ENCODE measurements at regions of chr5 and their contacts with region 1.

Region 1: DNA sequence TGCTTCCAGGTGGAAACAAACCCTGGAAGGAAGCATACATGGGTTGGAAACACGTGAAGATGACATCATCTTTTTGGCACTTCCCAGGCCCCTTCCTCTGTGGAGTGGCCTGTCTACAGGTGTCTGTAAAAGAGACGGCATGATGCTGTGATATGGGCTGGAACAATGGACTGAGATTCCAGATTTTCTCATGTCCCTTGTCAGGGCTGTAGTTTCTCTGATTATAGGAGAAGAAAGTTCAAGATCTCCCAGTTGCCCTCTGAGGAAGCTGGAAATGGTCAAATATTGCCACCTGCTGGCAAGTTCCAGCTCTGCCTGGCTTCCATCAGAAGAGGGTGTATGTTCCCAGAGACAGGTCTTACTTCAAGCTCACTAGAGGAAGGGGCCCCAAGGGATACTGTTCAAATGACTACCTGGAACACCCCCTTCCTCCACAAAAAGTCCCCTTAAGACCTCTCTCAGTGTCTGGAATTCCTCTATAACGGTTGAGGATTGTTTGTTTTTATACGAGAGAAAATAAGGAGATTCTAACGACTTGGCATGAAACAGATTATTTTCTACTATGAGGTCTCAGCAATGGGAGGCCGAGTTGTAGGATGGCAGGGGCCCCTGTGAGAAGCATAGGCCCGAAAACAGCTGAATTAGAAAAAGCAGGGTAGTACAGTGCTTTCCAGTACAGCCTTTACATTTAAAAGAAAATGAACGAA is 7.3 kb upstream of the ANXA6 start:
- DNase-seq: peak; percentile 92
- H3K4me3 Mint-ChIP-seq: no peak overlapping the region
- H3K27ac Mint-ChIP-seq: no peak overlapping the region
- H3K4me1 Mint-ChIP-seq: peaks cover 17% of the 10 kb centered on the region
- H3K27me3 Mint-ChIP-seq: no peaks in the 10 kb centered on the region

Region 2: DNA sequence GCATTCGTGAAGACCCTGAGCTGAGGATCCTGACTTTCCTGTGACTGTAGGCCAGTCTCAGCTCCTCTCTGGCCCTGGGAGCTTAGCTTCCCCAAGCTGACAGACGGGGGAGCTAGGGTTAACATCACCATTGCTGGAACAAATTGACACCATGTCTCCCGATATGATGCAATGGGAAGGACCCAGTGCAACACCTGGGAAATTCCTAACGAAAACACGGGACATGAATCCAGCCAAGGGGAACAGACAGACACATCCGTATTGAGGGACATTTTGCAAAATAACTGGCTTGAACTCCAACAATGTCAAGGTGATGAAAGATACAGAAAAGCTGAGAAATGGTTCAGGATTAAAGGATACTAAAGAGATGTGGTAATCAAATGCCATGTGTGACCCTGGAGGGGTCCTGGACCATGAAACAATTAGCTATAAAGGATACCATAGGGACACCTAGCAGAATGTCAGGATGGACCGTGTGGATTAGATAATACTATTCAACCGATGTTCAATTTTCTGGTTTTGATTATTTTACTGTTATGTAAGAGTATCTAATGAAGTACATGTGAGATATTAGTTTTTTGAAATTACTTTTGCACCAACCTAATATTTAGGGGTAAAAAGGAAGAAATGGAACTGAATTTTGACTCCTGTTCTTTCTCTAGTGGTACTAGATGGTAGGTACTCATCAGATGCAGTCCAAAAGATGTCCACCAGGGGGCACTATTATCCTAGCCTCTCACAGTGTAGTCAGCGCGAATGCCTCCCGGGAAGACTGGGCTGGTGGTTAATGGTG is 604.2 kb before region 1 on chr5:
- CTCF ChIA-PET with region 1: no interaction called
- intact Hi-C with region 1: loop called (anchors 2 kb)
- DNase-seq: peak; percentile 96
- H3K4me3 Mint-ChIP-seq: no peak overlapping the region
- H3K27ac Mint-ChIP-seq: no peak overlapping the region
- H3K4me1 Mint-ChIP-seq: no peaks in the 10 kb centered on the region
- H3K27me3 Mint-ChIP-seq: no peaks in the 10 kb centered on the region

Region 3: GRCh38 chr5:151002250-151002649 is 162.6 kb before region 1 on chr5:
- CTCF ChIA-PET with region 1: interaction called, 10 read pairs
- intact Hi-C with region 1: loop called (anchors 1 kb)
- DNase-seq: peak; percentile 29
- H3K4me3 Mint-ChIP-seq: no peak overlapping the region
- H3K27ac Mint-ChIP-seq: no peak overlapping the region
- H3K4me1 Mint-ChIP-seq: no peaks in the 10 kb centered on the region
- H3K27me3 Mint-ChIP-seq: no peaks in the 10 kb centered on the region

Region 4: GRCh38 chr5:151115274-151115905 is 49.4 kb before region 1 on chr5:
- CTCF ChIA-PET with region 1: interaction called, 160 read pairs
- intact Hi-C with region 1: no loop called
- DNase-seq: peak; percentile 84
- H3K4me3 Mint-ChIP-seq: no peak overlapping the region
- H3K27ac Mint-ChIP-seq: no peak overlapping the region
- H3K4me1 Mint-ChIP-seq: peaks cover 3% of the 10 kb centered on the region
- H3K27me3 Mint-ChIP-seq: no peaks in the 10 kb centered on the region

Region 5: GRCh38 chr5:151150471-151151262 is 14.2 kb before region 1 on chr5:
- CTCF ChIA-PET with region 1: interaction called, 20 read pairs
- intact Hi-C with region 1: no loop called
- DNase-seq: peak; percentile 91
- H3K4me3 Mint-ChIP-seq: peak overlapping the region; percentile 64
- H3K27ac Mint-ChIP-seq: peak overlapping the region; percentile 90
- H3K4me1 Mint-ChIP-seq: peaks cover 94% of the 10 kb centered on the region
- H3K27me3 Mint-ChIP-seq: no peaks in the 10 kb centered on the region

Region 6: GRCh38 chr5:151239237-151239861 is 74.5 kb after region 1 on chr5:
- CTCF ChIA-PET with region 1: interaction called, 7 read pairs
- intact Hi-C with region 1: loop called (anchors 1 kb)
- DNase-seq: peak; percentile 64
- H3K4me3 Mint-ChIP-seq: no peak overlapping the region
- H3K27ac Mint-ChIP-seq: no peak overlapping the region
- H3K4me1 Mint-ChIP-seq: peaks cover 18% of the 10 kb centered on the region
- H3K27me3 Mint-ChIP-seq: no peaks in the 10 kb centered on the region

Region 7: DNA sequence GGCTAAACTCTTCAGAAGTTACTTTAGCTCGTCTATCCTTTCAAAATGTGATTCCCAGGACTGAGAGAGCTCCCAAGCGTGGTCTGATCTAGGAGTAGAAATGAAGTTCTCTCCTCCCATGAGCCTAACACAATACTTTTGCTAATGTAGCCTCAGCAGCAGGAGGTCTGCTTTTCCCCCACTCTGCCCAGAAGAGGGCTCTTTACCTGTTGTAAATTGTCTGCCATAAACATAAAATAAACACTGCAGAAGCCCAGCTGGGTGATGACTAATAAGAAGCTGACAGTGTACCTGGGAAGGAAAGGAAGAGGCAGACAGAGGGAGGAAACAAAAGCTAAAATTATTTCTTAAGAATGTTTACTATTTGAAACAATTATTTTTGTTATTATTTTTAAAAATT is 123.3 kb after region 1 on chr5:
- CTCF ChIA-PET with region 1: no interaction called
- intact Hi-C with region 1: no loop called
- DNase-seq: no peak
- H3K4me3 Mint-ChIP-seq: no peak overlapping the region
- H3K27ac Mint-ChIP-seq: no peak overlapping the region
- H3K4me1 Mint-ChIP-seq: no peaks in the 10 kb centered on the region
- H3K27me3 Mint-ChIP-seq: no peaks in the 10 kb centered on the region